ENCODE measurements at regions of chr2 and their contacts with region 1.

Region 1: GRCh38 chr2:149597668-149598326 is 10.2 kb upstream of the MMADHC start:
- DNase-seq: no peak
- H3K4me3 ChIP-seq: peak overlapping the region in 1 of 4 donors; percentile 26
- H3K27ac ChIP-seq: no peak overlapping the region
- H3K4me1 ChIP-seq: peaks cover 0 to 10% (median 2%) of the 10 kb centered on the region in 3 donors
- H3K27me3 ChIP-seq: no peaks in the 10 kb centered on the region
- CTCF ChIP-seq: peak; percentile 63 to 83 (median 76)
- POLR2A ChIP-seq: no peak

Region 2: DNA sequence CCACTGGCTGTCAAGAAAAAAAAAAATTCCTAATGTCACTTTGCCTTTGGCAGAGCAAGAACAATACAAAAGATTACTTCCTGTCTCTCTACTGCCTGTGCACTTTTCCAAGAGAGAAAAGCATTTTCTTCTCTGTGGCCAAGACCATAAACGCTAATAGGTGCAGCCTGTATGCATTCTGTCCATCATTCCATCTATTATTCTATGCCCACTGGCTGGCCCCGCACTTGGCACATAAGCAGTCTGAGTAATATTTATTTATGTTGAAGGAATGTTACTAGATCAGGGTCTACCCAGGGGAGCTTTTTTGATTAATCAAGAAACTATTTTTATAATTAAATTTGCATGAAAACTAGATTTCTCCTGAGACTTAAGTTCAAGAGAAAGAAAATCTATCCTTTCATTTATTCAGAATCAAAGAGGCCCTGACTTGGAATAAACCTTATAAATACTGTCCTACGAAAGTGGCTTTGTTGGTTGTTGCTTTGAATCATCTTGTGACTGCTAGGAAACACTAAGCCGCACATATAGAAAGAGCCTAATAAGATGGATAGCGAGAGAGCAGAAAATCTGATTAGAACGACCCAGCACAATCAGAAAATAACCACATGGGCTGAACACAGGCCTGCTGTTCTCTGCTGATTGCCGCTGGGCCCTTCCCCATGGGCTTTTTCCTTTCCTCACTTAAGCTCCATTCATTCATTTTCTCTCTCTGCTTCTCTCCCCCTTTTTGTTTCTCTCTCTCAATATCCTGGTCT is 69.6 kb before region 1 on chr2:
- intact Hi-C with region 1: no loop called
- DNase-seq: no peak
- H3K4me3 ChIP-seq: no peak overlapping the region
- H3K27ac ChIP-seq: no peak overlapping the region
- H3K4me1 ChIP-seq: no peaks in the 10 kb centered on the region
- H3K27me3 ChIP-seq: peaks cover 0 to 14% (median 0%) of the 10 kb centered on the region in 4 donors
- CTCF ChIP-seq: no peak
- POLR2A ChIP-seq: no peak

Region 3: GRCh38 chr2:150487537-150488429 is 890.0 kb after region 1 on chr2 and contains the start of gene RND3:
- intact Hi-C with region 1: loop called (anchors 10 kb)
- DNase-seq: peak; percentile 31
- H3K4me3 ChIP-seq: peak within 1 kb of the TSS; percentile 66 to 80 (median 78)
- H3K27ac ChIP-seq: peak within 1 kb of the TSS; percentile 94 to 99 (median 97)
- H3K4me1 ChIP-seq: peaks cover 0 to 23% (median 11%) of the 10 kb centered on the region in 3 donors
- H3K27me3 ChIP-seq: peaks cover 0 to 11% (median 0%) of the 10 kb centered on the region in 4 donors
- CTCF ChIP-seq: peak; percentile 44 to 94 (median 84)
- POLR2A ChIP-seq: peak in 3 of 4 donors; percentile 88 to 97 (median 90)
- total RNA-seq, gene RND3: 67.3 to 163 (median 97.1) TPM

Region 4: DNA sequence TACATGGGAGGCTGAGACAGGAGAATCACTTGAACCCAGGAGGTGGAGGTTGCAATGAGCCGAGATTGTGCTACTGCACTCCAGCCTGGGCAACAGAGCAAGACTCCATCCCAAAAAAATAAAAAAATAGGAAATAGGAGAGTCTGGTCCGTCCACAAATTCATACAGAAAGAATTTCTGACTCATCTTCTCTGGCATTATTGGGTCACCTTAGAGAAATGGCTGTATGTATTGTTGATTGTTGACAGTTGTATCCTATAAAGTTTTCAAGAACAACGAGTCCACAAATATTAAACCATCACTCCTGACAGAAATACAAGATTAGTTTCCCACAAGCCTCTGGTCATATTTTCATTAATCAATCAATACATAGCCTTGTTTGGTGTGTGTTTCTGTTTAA is 1643.4 kb after region 1 on chr2:
- intact Hi-C with region 1: loop called (anchors 10 kb)
- DNase-seq: no peak
- H3K4me3 ChIP-seq: no peak overlapping the region
- H3K27ac ChIP-seq: no peak overlapping the region
- H3K4me1 ChIP-seq: peaks cover 0 to 5% (median 0%) of the 10 kb centered on the region in 3 donors
- H3K27me3 ChIP-seq: no peaks in the 10 kb centered on the region
- CTCF ChIP-seq: no peak
- POLR2A ChIP-seq: no peak

Measured in esophagus squamous epithelium (tissue), 5 donors.